Right lobe of liver (tissue), 6 donors: ENCODE measurements at regions of chr6 and their contacts with region 1.

Region 1: GRCh38 chr6:36360241-36361054 is 23.8 kb upstream of the BNIP5 start:
- DNase-seq: peak; percentile 71 to 77 (median 72)
- ATAC-seq: peak; percentile 94 to 98 (median 94)
- H3K4me3 ChIP-seq: no peak overlapping the region
- H3K27ac ChIP-seq: no peak overlapping the region
- H3K4me1 ChIP-seq: no peaks in the 10 kb centered on the region
- H3K27me3 ChIP-seq: no peaks in the 10 kb centered on the region
- CTCF ChIP-seq: peak; percentile 69 to 83 (median 76)
- POLR2A ChIP-seq: no peak

Region 2: DNA sequence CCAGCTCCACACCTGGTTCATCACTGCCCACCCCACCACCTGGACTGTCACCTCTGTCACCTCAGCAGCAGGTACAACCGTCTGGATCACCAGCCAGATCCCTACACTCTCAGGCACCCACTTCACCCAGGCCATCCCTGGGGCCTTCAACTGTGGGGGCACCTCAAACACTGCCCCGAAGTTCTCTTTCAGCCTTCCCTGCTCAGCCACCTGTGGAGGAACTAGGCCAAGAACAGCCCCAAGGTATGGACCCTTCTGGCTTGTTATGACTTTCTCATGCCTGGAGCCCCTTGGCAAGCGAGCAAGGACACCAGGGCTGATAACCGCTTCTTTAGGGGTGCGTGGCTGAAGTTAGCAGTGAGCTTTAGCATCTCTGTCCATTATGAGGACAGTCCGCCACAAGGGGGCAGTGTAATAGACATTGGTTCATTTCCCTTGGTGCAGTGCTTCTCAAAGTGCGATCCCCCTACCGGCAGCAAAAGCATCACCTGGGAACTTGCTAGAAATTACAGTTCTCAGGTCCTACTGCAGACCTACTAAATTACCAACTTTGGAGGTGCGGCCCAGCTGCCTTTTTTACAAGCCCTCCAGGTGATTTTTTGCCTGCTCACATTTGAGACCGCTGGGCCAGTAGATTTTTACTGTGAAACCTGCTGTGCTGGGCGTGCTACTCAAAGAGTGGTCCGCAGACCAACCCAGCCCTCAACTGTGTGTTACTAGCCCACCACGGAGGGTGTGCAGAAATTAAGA is 58.0 kb before region 1 on chr6:
- intact Hi-C with region 1: loop called (anchors 10 kb)
- DNase-seq: peak; percentile 78 to 91 (median 81)
- ATAC-seq: peak; percentile 97 to 99 (median 98)
- H3K4me3 ChIP-seq: no peak overlapping the region
- H3K27ac ChIP-seq: no peak overlapping the region
- H3K4me1 ChIP-seq: no peaks in the 10 kb centered on the region
- H3K27me3 ChIP-seq: no peaks in the 10 kb centered on the region
- CTCF ChIP-seq: peak; percentile 92 to 98 (median 96)
- POLR2A ChIP-seq: no peak